Activated CD8-positive, alpha-beta memory T cell treated with anti-CD3 and anti-CD28 coated beads, Interleukin-2, amount 10 ng/mL, durations not matched to agents 7 days and 5 days (primary cell): ENCODE measurements at regions of chr12 and their contacts with region 1.

Region 1: DNA sequence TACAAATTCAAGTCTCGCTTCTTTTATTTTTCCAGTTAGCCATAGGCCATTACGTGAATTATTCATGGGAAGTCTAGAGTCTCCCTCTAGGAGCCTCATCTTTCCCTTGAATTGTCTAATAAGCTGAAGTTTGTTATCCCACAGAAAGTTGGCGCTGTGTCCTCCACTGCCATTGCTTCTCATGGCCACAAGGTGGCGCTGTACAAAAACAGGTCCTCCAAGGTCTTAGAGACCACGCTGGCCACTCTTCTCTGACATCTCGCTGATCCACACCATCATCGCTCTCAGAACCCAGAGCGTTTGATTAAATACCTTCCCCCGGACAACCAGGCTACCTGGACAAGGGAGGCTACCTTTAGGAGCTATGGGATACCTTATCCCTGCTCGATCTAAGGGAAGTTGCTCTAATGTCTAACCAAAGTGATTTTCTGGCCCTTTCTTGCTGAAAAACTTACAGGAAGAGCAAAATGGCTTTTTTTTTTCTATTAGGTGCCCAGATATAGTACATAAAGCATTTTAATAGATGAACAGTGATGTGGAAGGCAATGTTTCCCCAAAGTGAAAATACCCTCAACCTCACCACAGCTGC is 110.0 kb downstream of the CCDC60 start:
- DNase-seq: peak; percentile 63
- ATAC-seq: peak; percentile 63
- H3K4me3 Mint-ChIP-seq: no peak overlapping the region
- H3K27ac Mint-ChIP-seq: no peak overlapping the region
- H3K4me1 Mint-ChIP-seq: peaks cover 3% of the 10 kb centered on the region
- H3K27me3 Mint-ChIP-seq: peaks cover 11% of the 10 kb centered on the region

Region 2: GRCh38 chr12:119363490-119363889 is 81.1 kb before region 1 on chr12:
- CTCF ChIA-PET with region 1: no interaction called
- DNase-seq: no peak
- ATAC-seq: no peak
- H3K4me3 Mint-ChIP-seq: no peak overlapping the region
- H3K27ac Mint-ChIP-seq: no peak overlapping the region
- H3K4me1 Mint-ChIP-seq: no peaks in the 10 kb centered on the region
- H3K27me3 Mint-ChIP-seq: peaks cover 4% of the 10 kb centered on the region

Region 3: GRCh38 chr12:119373666-119374065 is 70.9 kb before region 1 on chr12:
- CTCF ChIA-PET with region 1: no interaction called
- DNase-seq: no peak
- ATAC-seq: no peak
- H3K4me3 Mint-ChIP-seq: no peak overlapping the region
- H3K27ac Mint-ChIP-seq: no peak overlapping the region
- H3K4me1 Mint-ChIP-seq: peaks cover 23% of the 10 kb centered on the region
- H3K27me3 Mint-ChIP-seq: peaks cover 21% of the 10 kb centered on the region

Region 4: DNA sequence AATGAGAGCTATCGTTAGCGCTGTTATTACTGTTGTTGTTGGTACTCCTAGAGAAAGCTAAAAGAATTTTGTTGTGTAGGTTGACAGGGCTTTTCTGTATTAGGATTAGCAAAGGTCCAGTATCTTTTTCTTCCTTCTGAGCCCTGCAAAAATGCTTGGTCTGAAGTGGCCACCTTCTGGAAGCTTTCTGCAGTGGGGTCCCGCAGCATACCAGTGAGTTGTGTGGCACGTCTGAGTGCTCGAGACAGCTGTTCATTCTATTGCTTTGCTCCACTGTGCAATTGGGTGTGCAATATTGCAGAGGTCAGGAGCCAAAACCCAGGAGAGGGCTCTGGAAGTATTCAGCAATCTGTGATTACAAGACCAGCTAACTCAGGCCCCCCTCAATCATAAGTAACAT is 52.9 kb before region 1 on chr12:
- CTCF ChIA-PET with region 1: no interaction called
- DNase-seq: no peak
- ATAC-seq: no peak
- H3K4me3 Mint-ChIP-seq: no peak overlapping the region
- H3K27ac Mint-ChIP-seq: no peak overlapping the region
- H3K4me1 Mint-ChIP-seq: peaks cover 4% of the 10 kb centered on the region
- H3K27me3 Mint-ChIP-seq: peaks cover 12% of the 10 kb centered on the region

Region 5: GRCh38 chr12:119432949-119433348 is 11.6 kb before region 1 on chr12:
- CTCF ChIA-PET with region 1: interaction called, 24 read pairs
- DNase-seq: no peak
- ATAC-seq: no peak
- H3K4me3 Mint-ChIP-seq: no peak overlapping the region
- H3K27ac Mint-ChIP-seq: no peak overlapping the region
- H3K4me1 Mint-ChIP-seq: no peaks in the 10 kb centered on the region
- H3K27me3 Mint-ChIP-seq: no peaks in the 10 kb centered on the region

Region 6: DNA sequence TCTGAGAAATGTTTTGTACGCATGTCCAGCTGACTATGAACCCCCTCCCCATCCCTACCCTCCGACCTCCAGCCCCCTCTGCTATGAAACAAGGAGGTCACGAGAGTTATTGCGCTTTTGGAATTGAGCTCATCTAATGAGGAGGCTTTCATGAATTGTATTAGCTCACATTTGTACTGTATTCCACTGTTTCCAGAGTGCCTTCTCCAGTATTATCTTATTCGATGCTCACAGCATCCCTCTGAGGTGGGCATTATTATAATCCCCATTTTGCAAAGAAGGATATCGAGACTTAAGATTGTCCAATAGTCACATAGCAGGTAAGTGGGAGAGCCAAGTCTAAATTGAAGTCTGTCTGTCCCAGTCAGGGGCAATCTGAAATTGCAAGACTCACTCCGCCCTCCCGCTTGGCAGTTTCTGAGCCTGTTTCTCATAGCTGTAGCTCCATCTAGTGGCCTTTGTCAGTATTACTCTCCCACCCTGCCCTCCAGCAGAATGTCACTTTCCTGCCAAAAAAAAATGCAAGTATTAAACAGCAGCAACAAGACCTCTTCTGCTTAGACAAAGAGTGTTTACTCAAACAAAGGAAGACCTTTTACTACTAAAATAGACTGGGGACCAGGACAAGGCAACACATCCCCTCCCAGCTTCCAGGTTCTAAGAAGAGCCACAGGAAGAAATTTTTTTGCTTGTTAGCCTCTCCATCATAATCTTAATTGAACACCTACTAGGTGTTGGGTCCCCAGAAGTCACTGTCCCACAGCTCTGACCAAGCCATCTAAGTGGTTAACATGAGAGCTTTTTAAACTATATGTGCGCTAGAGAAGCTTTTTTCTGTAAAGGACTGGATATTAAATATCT is 100.4 kb after region 1 on chr12:
- CTCF ChIA-PET with region 1: interaction called, 48 read pairs
- DNase-seq: peak; percentile 63
- ATAC-seq: peak; percentile 51
- H3K4me3 Mint-ChIP-seq: no peak overlapping the region
- H3K27ac Mint-ChIP-seq: no peak overlapping the region
- H3K4me1 Mint-ChIP-seq: no peaks in the 10 kb centered on the region
- H3K27me3 Mint-ChIP-seq: peaks cover 15% of the 10 kb centered on the region

Region 7: DNA sequence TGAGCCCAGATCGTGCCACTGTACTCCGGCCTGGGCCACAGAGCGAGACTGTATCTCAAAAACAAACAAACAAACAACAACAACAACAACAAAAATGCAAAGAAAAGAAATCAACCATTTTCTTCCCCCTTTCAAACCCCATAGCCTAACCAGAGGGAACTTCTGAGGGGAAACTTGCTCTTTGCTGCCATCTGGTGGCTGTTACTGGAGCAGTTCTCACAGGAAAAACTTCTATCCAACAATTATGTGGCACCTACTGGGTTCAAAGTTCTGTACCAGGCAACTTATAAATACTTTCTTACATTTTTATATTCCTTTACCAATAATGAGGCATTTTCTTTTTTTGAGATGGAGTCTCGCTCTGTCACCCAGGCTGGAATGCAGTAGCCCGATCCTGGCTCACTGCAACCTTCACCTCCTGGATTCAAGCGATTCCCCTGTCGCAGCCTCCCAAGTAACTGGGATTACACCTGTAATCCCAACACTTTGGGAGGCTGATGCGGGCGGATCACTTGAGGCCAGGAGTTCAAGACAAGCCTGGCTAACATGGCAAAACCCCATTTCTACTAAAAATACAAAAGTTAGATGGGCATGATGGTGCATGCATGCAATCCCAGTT is 493.6 kb after region 1 on chr12:
- CTCF ChIA-PET with region 1: no interaction called
- DNase-seq: peak; percentile 71
- ATAC-seq: peak; percentile 83
- H3K4me3 Mint-ChIP-seq: no peak overlapping the region
- H3K27ac Mint-ChIP-seq: no peak overlapping the region
- H3K4me1 Mint-ChIP-seq: peaks cover 2% of the 10 kb centered on the region
- H3K27me3 Mint-ChIP-seq: peaks cover 11% of the 10 kb centered on the region